Transverse colon (tissue), 4 donors: ENCODE measurements at regions of chr7 and their contacts with region 1.

Region 1: GRCh38 chr7:28389504-28390395 is 22.6 kb upstream of the CREB5 start:
- DNase-seq: no peak
- H3K4me3 ChIP-seq: peak overlapping the region in 2 of 4 donors; percentile 9 to 17
- H3K27ac ChIP-seq: no peak overlapping the region
- H3K4me1 ChIP-seq: peaks cover 0 to 7% (median 0%) of the 10 kb centered on the region in 4 donors
- H3K27me3 ChIP-seq: peaks cover 30% of the 10 kb centered on the region
- CTCF ChIP-seq: peak; percentile 65 to 89 (median 74)
- EP300 ChIP-seq: no peak
- POLR2A ChIP-seq: no peak

Region 2: GRCh38 chr7:28615091-28615490 is 225.3 kb after region 1 on chr7:
- in situ Hi-C with region 1: loop called in 1 of 4 experiments (anchors 25 kb)
- intact Hi-C with region 1: no loop called
- DNase-seq: no peak
- H3K4me3 ChIP-seq: no peak overlapping the region
- H3K27ac ChIP-seq: no peak overlapping the region
- H3K4me1 ChIP-seq: no peaks in the 10 kb centered on the region
- H3K27me3 ChIP-seq: peaks cover 5% of the 10 kb centered on the region
- CTCF ChIP-seq: no peak
- EP300 ChIP-seq: no peak
- POLR2A ChIP-seq: no peak

Region 3: GRCh38 chr7:28853834-28854749 is 464.3 kb after region 1 on chr7:
- in situ Hi-C with region 1: loop called in 3 of 4 experiments (anchors 10 kb)
- intact Hi-C with region 1: loop called (anchors 5 kb)
- DNase-seq: peak; percentile 84
- H3K4me3 ChIP-seq: peak overlapping the region; percentile 31 to 62 (median 40)
- H3K27ac ChIP-seq: no peak overlapping the region
- H3K4me1 ChIP-seq: peaks cover 0 to 15% (median 4%) of the 10 kb centered on the region in 4 donors
- H3K27me3 ChIP-seq: peaks cover 44% of the 10 kb centered on the region
- CTCF ChIP-seq: peak; percentile 81 to 90 (median 88)
- EP300 ChIP-seq: no peak
- POLR2A ChIP-seq: no peak

Region 4: DNA sequence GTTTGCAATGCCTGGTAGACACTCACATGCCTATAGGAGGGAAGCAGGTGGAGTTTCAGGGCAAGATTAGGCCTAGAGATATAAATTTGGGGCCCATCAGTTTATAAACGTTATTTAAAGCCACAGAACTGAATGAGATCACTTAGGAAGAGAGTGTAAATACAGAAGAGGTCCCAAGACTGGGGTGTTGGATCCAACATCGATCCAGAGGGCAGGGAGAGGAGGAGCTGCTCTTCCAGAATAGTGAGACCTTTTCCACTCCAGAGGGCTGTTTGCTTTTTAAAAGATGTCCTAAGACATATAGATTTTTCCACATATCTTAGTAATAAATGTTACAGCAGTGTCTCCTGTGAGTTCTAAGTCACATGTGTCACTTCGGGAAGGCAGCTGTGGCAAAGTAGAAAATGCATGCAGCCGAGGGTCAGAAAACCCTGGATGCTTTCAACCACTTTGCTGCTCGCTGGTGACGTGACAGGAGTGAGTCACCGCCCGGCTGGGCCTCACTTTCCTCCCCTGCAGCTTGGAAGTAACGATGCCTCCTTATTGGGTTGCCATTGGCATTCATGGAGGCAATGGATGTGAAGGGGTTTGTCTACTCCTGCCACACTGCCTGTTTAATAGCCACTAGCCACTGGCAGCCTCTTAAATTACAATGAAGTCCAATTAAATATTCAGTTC is 473.0 kb after region 1 on chr7:
- in situ Hi-C with region 1: loop called (anchors 5 to 10 kb)
- intact Hi-C with region 1: no loop called
- DNase-seq: no peak
- H3K4me3 ChIP-seq: no peak overlapping the region
- H3K27ac ChIP-seq: no peak overlapping the region
- H3K4me1 ChIP-seq: no peaks in the 10 kb centered on the region
- H3K27me3 ChIP-seq: peaks cover 13% of the 10 kb centered on the region
- CTCF ChIP-seq: no peak
- EP300 ChIP-seq: no peak
- POLR2A ChIP-seq: no peak